Endothelial cell of umbilical vein (primary cell): ENCODE measurements at regions of chr3 and their contacts with region 1.

Region 1: GRCh38 chr3:149657926-149658733 is at the start of gene WWTR1:
- DNase-seq: peak; percentile 97
- H3K4me3 ChIP-seq: peak within 1 kb of the TSS; percentile 87 to 99 (median 98)
- H3K27ac ChIP-seq: peak within 1 kb of the TSS; percentile 85
- H3K4me1 ChIP-seq: peaks cover 39% of the 10 kb centered on the region
- H3K27me3 ChIP-seq: no peaks in the 10 kb centered on the region
- CTCF ChIP-seq: no peak
- POLR2A ChIP-seq: peak; percentile 99
- total RNA-seq, gene WWTR1: 210 and 262 TPM in 2 replicates

Region 2: DNA sequence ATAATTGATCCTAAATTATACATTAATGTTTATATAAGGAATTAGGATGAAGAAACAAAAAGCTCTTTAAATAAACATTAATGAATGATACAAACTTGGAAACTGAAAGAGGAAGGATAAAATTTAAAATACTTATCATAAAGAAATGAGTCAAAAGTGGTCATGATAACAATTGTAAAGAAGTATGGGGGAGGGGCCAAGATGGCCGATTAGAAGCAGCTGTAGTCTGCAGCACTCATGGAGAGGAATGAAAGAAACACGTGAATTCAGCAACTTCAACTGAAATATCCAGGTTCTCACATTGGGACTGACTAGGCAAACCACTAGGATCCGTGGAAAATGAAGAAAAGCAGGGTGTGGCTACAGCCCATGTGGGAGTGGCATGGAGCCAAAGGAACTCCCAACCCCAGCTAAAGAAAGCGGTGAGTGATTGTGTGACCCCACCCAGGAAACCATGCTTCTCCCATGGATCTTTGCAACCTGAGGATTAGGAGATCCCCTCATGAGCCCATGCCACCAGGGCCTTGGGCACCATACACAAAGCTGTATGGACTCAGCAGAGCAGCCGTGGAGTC is 423.4 kb before region 1 on chr3:
- CTCF ChIA-PET with region 1: no interaction called
- POLR2A ChIA-PET with region 1: no interaction called
- dilution Hi-C with region 1: no loop called
- intact Hi-C with region 1: no loop called
- DNase-seq: no peak
- H3K4me3 ChIP-seq: no peak overlapping the region
- H3K27ac ChIP-seq: no peak overlapping the region
- H3K4me1 ChIP-seq: no peaks in the 10 kb centered on the region
- H3K27me3 ChIP-seq: no peaks in the 10 kb centered on the region
- CTCF ChIP-seq: no peak
- POLR2A ChIP-seq: no peak

Region 3: GRCh38 chr3:149527531-149528339 is 130.4 kb before region 1 on chr3:
- CTCF ChIA-PET with region 1: interaction called, 13 read pairs
- POLR2A ChIA-PET with region 1: interaction called, 6 read pairs
- dilution Hi-C with region 1: no loop called
- intact Hi-C with region 1: loop called (anchors 1 kb)
- DNase-seq: peak; percentile 85
- H3K4me3 ChIP-seq: no peak overlapping the region
- H3K27ac ChIP-seq: peak overlapping the region; percentile 62
- H3K4me1 ChIP-seq: peaks cover 43% of the 10 kb centered on the region
- H3K27me3 ChIP-seq: no peaks in the 10 kb centered on the region
- CTCF ChIP-seq: peak in 1 of 2 donors; percentile 50
- POLR2A ChIP-seq: no peak

Region 4: GRCh38 chr3:149566292-149566975 is 91.7 kb before region 1 on chr3:
- CTCF ChIA-PET with region 1: interaction called, 92 read pairs
- POLR2A ChIA-PET with region 1: interaction called, 11 read pairs
- dilution Hi-C with region 1: no loop called
- intact Hi-C with region 1: no loop called
- DNase-seq: no peak
- H3K4me3 ChIP-seq: no peak overlapping the region
- H3K27ac ChIP-seq: no peak overlapping the region
- H3K4me1 ChIP-seq: peaks cover 25% of the 10 kb centered on the region
- H3K27me3 ChIP-seq: no peaks in the 10 kb centered on the region
- CTCF ChIP-seq: no peak
- POLR2A ChIP-seq: no peak

Region 5: DNA sequence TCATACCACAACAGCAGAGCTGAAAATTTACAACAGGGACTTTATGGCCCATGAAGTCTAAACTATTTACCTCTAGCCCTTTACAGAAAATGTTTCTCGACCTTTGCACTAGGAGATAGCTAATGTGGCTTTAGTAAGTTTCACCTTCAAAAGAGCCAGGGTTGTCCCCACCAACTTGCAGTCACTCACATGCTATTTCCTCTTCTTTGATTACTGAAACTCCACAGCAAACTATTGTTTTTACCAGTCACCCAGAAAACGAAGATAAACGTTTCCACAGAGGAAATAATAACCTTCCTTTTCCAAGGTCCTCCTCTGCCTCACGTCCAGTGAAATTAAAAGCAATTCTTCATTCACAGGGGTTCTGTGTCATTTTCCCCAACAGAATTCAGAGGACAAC is 48.5 kb before region 1 on chr3:
- CTCF ChIA-PET with region 1: interaction called, 12 read pairs
- POLR2A ChIA-PET with region 1: interaction called, 5 read pairs
- dilution Hi-C with region 1: no loop called
- intact Hi-C with region 1: no loop called
- DNase-seq: peak; percentile 92
- H3K4me3 ChIP-seq: no peak overlapping the region
- H3K27ac ChIP-seq: peak overlapping the region; percentile 83
- H3K4me1 ChIP-seq: peaks cover 99% of the 10 kb centered on the region
- H3K27me3 ChIP-seq: no peaks in the 10 kb centered on the region
- CTCF ChIP-seq: no peak
- POLR2A ChIP-seq: no peak

Region 6: GRCh38 chr3:149670742-149671492 is 12.8 kb after region 1 on chr3:
- CTCF ChIA-PET with region 1: interaction called, 16 read pairs
- POLR2A ChIA-PET with region 1: no interaction called
- dilution Hi-C with region 1: no loop called
- intact Hi-C with region 1: no loop called
- DNase-seq: no peak
- H3K4me3 ChIP-seq: no peak overlapping the region
- H3K27ac ChIP-seq: no peak overlapping the region
- H3K4me1 ChIP-seq: no peaks in the 10 kb centered on the region
- H3K27me3 ChIP-seq: no peaks in the 10 kb centered on the region
- CTCF ChIP-seq: no peak
- POLR2A ChIP-seq: no peak

Region 7: GRCh38 chr3:149771652-149772271 is 113.6 kb after region 1 on chr3:
- CTCF ChIA-PET with region 1: interaction called, 13 read pairs
- POLR2A ChIA-PET with region 1: no interaction called
- dilution Hi-C with region 1: no loop called
- intact Hi-C with region 1: no loop called
- DNase-seq: peak; percentile 58
- H3K4me3 ChIP-seq: no peak overlapping the region
- H3K27ac ChIP-seq: no peak overlapping the region
- H3K4me1 ChIP-seq: no peaks in the 10 kb centered on the region
- H3K27me3 ChIP-seq: peaks cover 3% of the 10 kb centered on the region in 2 experiments
- CTCF ChIP-seq: peak; percentile 70 to 83
- POLR2A ChIP-seq: no peak